Activated CD8-positive, alpha-beta T cell treated with anti-CD3 and anti-CD28 coated beads for 36 hours (primary cell): ENCODE measurements at regions of chr2 and their contacts with region 1.

Region 1: GRCh38 chr2:64551851-64552250 is 27.7 kb downstream of the AFTPH start:
- DNase-seq: no peak
- ATAC-seq: no peak
- H3K4me3 Mint-ChIP-seq: no peak overlapping the region
- H3K27ac Mint-ChIP-seq: no peak overlapping the region
- H3K4me1 Mint-ChIP-seq: peaks cover 21% of the 10 kb centered on the region
- H3K27me3 Mint-ChIP-seq: no peaks in the 10 kb centered on the region
- CTCF ChIP-seq: no peak

Region 2: DNA sequence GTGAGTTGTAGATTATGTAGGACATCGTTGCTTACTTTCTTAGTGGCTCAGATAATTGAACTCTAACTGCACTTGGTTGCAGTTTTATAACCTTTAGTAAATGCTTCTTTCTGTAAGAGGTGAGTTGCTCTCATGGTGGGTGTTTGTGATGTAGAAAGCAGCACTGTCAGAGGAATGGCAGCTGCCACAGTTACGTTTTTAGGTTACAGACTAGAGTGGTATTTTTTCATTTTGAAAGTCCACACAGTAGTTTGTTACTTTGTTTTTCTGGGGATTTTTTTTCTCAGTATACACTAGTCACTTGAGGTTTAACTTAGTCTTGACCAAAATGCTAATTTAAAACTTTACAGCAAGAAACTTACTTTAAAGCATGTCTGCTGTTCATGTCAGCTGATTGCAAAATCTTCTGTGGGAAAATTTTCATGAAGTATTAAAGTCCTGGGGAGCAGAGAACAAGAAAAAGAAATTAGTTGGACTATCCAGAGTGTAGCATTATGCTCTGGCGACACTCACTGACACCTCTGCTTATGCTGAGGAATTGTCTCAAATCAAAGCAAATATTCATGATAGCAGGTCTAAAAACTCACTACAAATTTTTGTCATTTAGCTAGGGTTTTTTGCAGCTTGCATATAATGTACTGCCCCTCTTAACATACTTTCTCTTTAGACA is 13.0 kb before region 1 on chr2:
- CTCF ChIA-PET with region 1: interaction called, 11 read pairs
- POLR2A ChIA-PET with region 1: interaction called, 3 read pairs
- intact Hi-C with region 1: no loop called
- DNase-seq: peak; percentile 43
- ATAC-seq: peak; percentile 67
- H3K4me3 Mint-ChIP-seq: no peak overlapping the region
- H3K27ac Mint-ChIP-seq: peak overlapping the region; percentile 47
- H3K4me1 Mint-ChIP-seq: peaks cover 78% of the 10 kb centered on the region
- H3K27me3 Mint-ChIP-seq: no peaks in the 10 kb centered on the region
- CTCF ChIP-seq: no peak

Region 3: GRCh38 chr2:64595397-64596160 is 43.7 kb after region 1 on chr2:
- CTCF ChIA-PET with region 1: no interaction called
- POLR2A ChIA-PET with region 1: no interaction called
- intact Hi-C with region 1: no loop called
- DNase-seq: no peak
- ATAC-seq: no peak
- H3K4me3 Mint-ChIP-seq: no peak overlapping the region
- H3K27ac Mint-ChIP-seq: no peak overlapping the region
- H3K4me1 Mint-ChIP-seq: peaks cover 21% of the 10 kb centered on the region
- H3K27me3 Mint-ChIP-seq: no peaks in the 10 kb centered on the region
- CTCF ChIP-seq: no peak

Region 4: DNA sequence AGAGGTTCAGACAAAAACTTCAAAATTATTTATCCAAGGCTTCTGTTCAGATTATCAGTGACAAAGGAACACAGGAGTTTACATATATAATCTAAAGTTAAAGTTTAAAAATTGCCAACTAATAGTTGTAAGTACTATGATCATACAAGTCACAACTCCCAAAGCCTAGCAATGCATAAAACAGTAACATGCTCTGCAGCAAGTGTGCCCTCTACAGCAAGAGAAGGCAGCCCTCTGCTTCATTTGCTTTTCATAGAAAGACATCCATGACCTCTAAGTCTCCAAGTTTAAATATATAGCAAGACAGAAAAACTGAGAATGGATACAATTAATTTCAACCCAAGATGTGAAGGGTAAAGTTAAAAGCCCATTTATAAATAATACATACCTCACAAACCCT is 564.8 kb after region 1 on chr2:
- CTCF ChIA-PET with region 1: no interaction called
- POLR2A ChIA-PET with region 1: no interaction called
- intact Hi-C with region 1: no loop called
- DNase-seq: no peak
- ATAC-seq: no peak
- H3K4me3 Mint-ChIP-seq: no peak overlapping the region
- H3K27ac Mint-ChIP-seq: no peak overlapping the region
- H3K4me1 Mint-ChIP-seq: peaks cover 49% of the 10 kb centered on the region
- H3K27me3 Mint-ChIP-seq: no peaks in the 10 kb centered on the region
- CTCF ChIP-seq: no peak